HEK293 (cell line): ENCODE measurements at regions of chr12 and their contacts with region 1.

Region 1: GRCh38 chr12:6582196-6582595 is 14.1 kb upstream of the NOP2 start:
- H3K4me3 ChIP-seq: no peak overlapping the region
- H3K27ac ChIP-seq: no peak overlapping the region
- H3K4me1 ChIP-seq: no peaks in the 10 kb centered on the region
- CTCF ChIP-seq: peak; percentile 23; the same call in 1 of the 2 replicates

Region 2: DNA sequence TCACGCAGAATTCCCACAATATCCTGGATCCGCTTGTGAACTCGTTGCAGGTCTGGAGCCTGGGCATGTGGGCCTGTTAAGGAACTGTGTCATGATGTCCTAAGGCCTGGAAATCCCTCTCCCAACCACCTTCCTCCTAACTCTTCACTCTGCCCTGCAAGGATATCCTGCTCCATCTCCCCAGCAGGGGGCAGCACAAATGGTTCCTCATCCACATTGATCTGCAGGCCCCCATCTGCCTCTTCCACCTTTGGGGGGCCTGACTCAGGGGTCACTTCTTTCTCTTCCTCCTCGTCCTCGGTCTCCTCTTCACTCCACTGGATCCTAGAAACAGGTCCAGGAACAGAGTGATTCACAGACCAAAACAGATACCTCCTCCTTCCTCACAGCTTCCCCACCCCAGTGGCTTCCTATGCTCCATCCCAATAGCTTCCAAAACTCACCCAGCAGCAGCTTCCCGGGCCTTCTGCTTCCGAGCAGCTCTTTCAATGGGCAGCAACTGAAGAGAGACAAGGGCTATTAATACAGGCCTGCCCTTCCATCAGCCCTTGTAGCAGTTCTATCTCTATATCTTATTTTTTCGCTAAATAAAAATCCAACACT is 18.6 kb before region 1 on chr12:
- CTCF ChIA-PET with region 1: interaction called, 16 read pairs
- POLR2A ChIA-PET with region 1: interaction called, 3 read pairs
- H3K4me3 ChIP-seq: no peak overlapping the region
- H3K27ac ChIP-seq: no peak overlapping the region
- H3K4me1 ChIP-seq: no peaks in the 10 kb centered on the region
- CTCF ChIP-seq: peak; percentile 76; the same call in 1 of the 2 replicates

Region 3: GRCh38 chr12:6570264-6570887 is 11.8 kb before region 1 on chr12:
- CTCF ChIA-PET with region 1: interaction called, 13 read pairs
- POLR2A ChIA-PET with region 1: interaction called, 3 read pairs
- H3K4me3 ChIP-seq: no peak overlapping the region
- H3K27ac ChIP-seq: 0 out of 2 replicates have a peak overlapping the region, but pooled peaks have one; percentile 22
- H3K4me1 ChIP-seq: peaks cover 2% of the 10 kb centered on the region; the same call in 1 of the 2 replicates
- CTCF ChIP-seq: peak; percentile 70